A673 (cell line): ENCODE measurements at regions of chr10 and their contacts with region 1.

Region 1: DNA sequence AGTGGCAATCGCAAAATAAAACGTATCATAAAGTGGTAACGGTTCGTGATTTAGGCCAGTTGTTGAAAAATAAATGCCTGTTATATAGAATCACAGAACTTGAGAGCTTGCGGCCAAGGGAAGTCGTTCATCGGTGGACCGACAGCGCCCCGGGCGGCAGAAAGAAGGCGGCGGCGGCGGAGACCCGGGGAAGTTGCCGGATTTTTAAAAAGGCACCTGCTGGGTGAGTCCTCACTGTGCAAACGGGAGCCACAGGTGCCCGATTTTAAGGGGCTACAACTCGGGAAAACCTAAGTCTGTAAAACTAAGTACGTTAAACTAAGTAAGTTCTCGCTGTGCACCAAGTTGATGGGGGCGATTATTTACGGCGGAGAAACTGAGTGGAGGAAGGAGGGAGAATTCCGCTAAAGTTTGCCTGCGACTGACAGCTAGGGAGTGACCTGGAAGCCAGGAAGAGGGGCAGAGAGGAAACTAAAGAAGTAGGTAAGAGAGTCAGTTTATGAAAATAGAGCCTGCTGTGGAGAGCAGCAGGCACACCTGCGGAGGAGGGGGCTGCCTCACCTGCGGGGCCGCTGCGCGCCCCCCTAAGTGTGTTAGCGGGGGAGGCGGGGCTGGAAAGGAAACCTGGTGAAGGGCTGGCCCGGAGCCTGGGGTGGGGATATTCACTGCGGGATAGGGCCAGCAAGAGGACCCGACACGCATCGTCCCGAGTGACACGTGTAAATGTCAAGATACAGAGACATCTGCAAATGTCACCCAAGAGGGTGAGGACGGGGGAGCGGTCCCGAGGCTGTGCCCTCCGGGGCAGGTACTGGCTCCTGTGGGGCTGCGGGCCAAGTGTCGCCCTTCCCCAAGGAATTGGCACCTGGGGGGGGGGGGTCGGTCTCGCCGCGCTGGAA is 1.0 kb downstream of the ADAM12 start:
- DNase-seq: peak; percentile 63
- H3K4me3 ChIP-seq: peak overlapping the region; percentile 29
- H3K27ac ChIP-seq: no peak overlapping the region
- H3K4me1 ChIP-seq: no peaks in the 10 kb centered on the region
- H3K27me3 ChIP-seq: peaks cover 42% of the 10 kb centered on the region
- CTCF ChIP-seq: peak; percentile 85

Region 2: GRCh38 chr10:126133906-126134656 is 253.2 kb before region 1 on chr10:
- CTCF ChIA-PET with region 1: no interaction called
- POLR2A ChIA-PET with region 1: no interaction called
- intact Hi-C with region 1: loop called (anchors 5 kb)
- DNase-seq: no peak
- H3K4me3 ChIP-seq: no peak overlapping the region
- H3K27ac ChIP-seq: no peak overlapping the region
- H3K4me1 ChIP-seq: peaks cover 21% of the 10 kb centered on the region
- H3K27me3 ChIP-seq: no peaks in the 10 kb centered on the region
- CTCF ChIP-seq: no peak